ENCODE measurements at regions of chr16 and their contacts with region 1.

Region 1: DNA sequence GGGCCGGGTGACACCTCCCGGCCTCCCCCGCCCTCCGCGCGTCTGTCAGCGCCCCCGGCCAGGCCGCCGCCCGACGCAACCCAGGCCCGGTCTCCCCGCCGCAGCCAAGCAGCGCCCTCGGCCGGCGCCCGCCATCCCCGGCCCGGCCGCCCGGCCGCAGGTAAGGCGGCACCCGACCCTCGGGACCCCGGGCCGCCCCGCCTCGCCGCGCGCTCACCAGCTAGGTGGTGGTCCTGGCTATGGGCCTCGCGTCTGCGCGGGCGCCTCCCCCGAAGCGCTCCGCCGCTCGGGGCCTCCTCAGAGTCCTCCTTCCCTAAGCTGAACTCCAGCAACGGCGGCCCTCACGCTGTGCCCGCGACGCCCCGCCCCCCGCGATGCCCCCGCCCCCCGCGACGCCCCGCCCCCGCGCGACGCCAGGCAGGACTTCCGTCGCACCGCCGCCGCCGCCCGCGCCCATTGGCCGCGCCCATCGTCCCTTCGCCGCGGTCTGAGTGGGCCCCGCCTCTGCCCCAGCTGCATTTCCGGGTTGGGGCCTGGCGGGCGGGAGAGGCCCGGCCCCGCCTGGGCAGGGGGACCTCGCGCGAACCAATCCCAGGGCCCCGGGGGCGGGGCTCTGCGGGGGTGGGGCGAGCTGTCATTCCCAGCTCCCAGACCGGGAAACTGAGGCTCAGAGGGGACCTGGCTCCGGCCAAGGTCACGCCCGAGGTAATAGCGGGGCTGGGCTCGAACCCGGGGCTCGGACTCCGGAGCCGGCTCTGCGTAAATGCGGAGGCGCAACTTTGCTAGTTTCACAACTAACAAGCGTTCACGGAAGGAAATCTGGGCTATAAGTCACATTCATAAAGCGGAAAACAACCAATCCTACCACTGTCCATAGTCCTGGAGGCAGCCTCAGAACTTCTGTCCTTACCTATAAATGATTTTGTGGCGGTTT is 9.0 kb upstream of the KCTD5 start:
- DNase-seq: peak; percentile 89 to 97 (median 96)
- ATAC-seq: peak; percentile 97
- H3K4me3 ChIP-seq: peak overlapping the region; percentile 75
- H3K4me3 Mint-ChIP-seq: peak overlapping the region; percentile 68 to 90 (median 86)
- H3K27ac ChIP-seq: peak overlapping the region; percentile 75
- H3K27ac Mint-ChIP-seq: peak overlapping the region in 8 of 9 donors; percentile 68 to 89 (median 82)
- H3K4me1 ChIP-seq: peaks cover 8 to 9% of the 10 kb centered on the region in 2 donors
- H3K4me1 Mint-ChIP-seq: peaks cover 12 to 45% (median 34%) of the 10 kb centered on the region in 7 donors
- H3K27me3 ChIP-seq: no peaks in the 10 kb centered on the region
- H3K27me3 Mint-ChIP-seq: no peaks in the 10 kb centered on the region

Region 2: DNA sequence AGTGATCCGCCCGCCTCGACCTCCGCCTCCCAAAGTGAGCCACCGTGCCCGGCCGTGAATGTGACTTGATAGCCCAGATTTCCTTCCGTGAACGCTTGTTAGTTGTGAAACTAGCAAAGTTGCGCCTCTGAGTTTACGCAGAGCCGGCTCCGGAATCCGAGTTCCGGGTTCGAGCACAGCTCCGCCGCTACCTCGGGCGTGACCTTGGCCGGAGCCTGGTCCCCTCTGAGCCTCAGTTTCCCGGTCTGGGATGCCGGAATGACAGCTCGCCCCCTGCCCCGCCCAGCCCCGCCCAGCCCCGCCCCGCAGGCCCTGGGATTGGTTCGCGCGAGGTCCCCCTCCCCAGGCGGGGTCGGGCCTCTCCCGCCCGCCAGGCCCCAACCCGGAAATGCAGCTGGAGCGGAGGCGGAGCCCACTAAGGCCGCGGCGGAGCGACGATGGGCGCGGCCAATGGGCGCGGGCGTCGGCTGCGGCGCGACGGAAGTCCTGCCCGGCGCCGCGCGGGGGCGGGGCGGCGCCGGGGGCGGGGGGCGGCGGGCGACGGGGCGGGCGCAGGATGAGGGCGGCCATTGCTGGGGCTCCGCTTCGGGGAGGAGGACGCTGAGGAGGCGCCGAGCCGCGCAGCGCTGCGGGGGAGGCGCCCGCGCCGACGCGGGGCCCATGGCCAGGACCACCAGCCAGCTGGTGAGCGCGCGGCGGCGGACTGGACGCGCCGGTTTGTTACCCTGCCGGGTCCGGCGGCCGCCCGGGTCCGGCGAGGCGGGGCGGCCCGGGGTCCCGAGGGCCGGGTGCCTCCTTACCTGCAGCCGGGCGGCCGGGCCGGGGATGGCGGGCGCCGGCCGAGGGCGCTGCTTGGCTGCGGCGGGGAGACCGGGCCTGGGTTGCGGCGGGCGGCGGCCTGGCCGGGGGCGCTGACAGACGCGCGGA is 135.6 kb before region 1 on chr16 and contains the start of gene PDPK1:
- CTCF ChIA-PET with region 1: no interaction called
- POLR2A ChIA-PET with region 1: no interaction called
- intact Hi-C with region 1: loop called in 1 of 2 experiments (anchors 5 kb)
- DNase-seq: peak; percentile 87 to 97 (median 94)
- ATAC-seq: peak; percentile 92
- H3K4me3 ChIP-seq: peak within 1 kb of the TSS; percentile 57
- H3K4me3 Mint-ChIP-seq: peak within 1 kb of the TSS; percentile 84 to 94 (median 88)
- H3K27ac ChIP-seq: peak within 1 kb of the TSS; percentile 65
- H3K27ac Mint-ChIP-seq: peak within 1 kb of the TSS; percentile 62 to 95 (median 89)
- H3K4me1 ChIP-seq: peaks cover 0 to 14% of the 10 kb centered on the region in 2 donors
- H3K4me1 Mint-ChIP-seq: peaks cover 26 to 53% (median 43%) of the 10 kb centered on the region in 7 donors
- H3K27me3 ChIP-seq: no peaks in the 10 kb centered on the region
- H3K27me3 Mint-ChIP-seq: no peaks in the 10 kb centered on the region
- total RNA-seq, gene PDPK1: 52.2 to 71.5 (median 58.3) TPM

Region 3: GRCh38 chr16:2715519-2715918 is 42.2 kb after region 1 on chr16:
- CTCF ChIA-PET with region 1: no interaction called
- POLR2A ChIA-PET with region 1: no interaction called
- intact Hi-C with region 1: loop called in 1 of 2 experiments (anchors 1 kb)
- DNase-seq: peak; percentile 63 to 92 (median 79)
- ATAC-seq: peak; percentile 97
- H3K4me3 ChIP-seq: no peak overlapping the region
- H3K4me3 Mint-ChIP-seq: peak overlapping the region in 4 of 10 donors; percentile 9 to 55 (median 32)
- H3K27ac ChIP-seq: no peak overlapping the region
- H3K27ac Mint-ChIP-seq: no peak overlapping the region
- H3K4me1 ChIP-seq: peaks cover 0 to 3% of the 10 kb centered on the region in 2 donors
- H3K4me1 Mint-ChIP-seq: peaks cover 0 to 15% (median 5%) of the 10 kb centered on the region in 7 donors
- H3K27me3 ChIP-seq: no peaks in the 10 kb centered on the region
- H3K27me3 Mint-ChIP-seq: peaks cover 0 to 6% (median 0%) of the 10 kb centered on the region in 5 donors

Region 4: GRCh38 chr16:2752035-2752849 is 78.9 kb after region 1 on chr16 and contains the start of gene SRRM2:
- CTCF ChIA-PET with region 1: no interaction called
- POLR2A ChIA-PET with region 1: interaction called, 4 read pairs
- intact Hi-C with region 1: loop called (anchors 1 to 2 kb)
- DNase-seq: peak; percentile 92 to 98 (median 96)
- ATAC-seq: peak; percentile 92
- H3K4me3 ChIP-seq: peak within 1 kb of the TSS; percentile 68
- H3K4me3 Mint-ChIP-seq: peak within 1 kb of the TSS; percentile 89 to 98 (median 94)
- H3K27ac ChIP-seq: peak within 1 kb of the TSS; percentile 100
- H3K27ac Mint-ChIP-seq: peak within 1 kb of the TSS; percentile 96 to 100 (median 99)
- H3K4me1 ChIP-seq: peaks cover 35 to 40% of the 10 kb centered on the region in 2 donors
- H3K4me1 Mint-ChIP-seq: peaks cover 37 to 57% (median 50%) of the 10 kb centered on the region in 7 donors
- H3K27me3 ChIP-seq: no peaks in the 10 kb centered on the region
- H3K27me3 Mint-ChIP-seq: no peaks in the 10 kb centered on the region
- total RNA-seq, gene SRRM2: 590 to 1,259 (median 1,020) TPM

Region 5: GRCh38 chr16:2911580-2912329 is 238.4 kb after region 1 on chr16 and contains the start of gene FLYWCH1:
- CTCF ChIA-PET with region 1: no interaction called
- POLR2A ChIA-PET with region 1: no interaction called
- intact Hi-C with region 1: loop called in 1 of 2 experiments (anchors 5 kb)
- DNase-seq: peak; percentile 94 to 99 (median 97)
- ATAC-seq: peak; percentile 99
- H3K4me3 ChIP-seq: peak within 1 kb of the TSS; percentile 85
- H3K4me3 Mint-ChIP-seq: peak within 1 kb of the TSS; percentile 80 to 97 (median 92)
- H3K27ac ChIP-seq: peak within 1 kb of the TSS; percentile 78
- H3K27ac Mint-ChIP-seq: peak within 1 kb of the TSS; percentile 80 to 96 (median 87)
- H3K4me1 ChIP-seq: peaks cover 7 to 8% of the 10 kb centered on the region in 2 donors
- H3K4me1 Mint-ChIP-seq: peaks cover 11 to 39% (median 30%) of the 10 kb centered on the region in 7 donors
- H3K27me3 ChIP-seq: no peaks in the 10 kb centered on the region
- H3K27me3 Mint-ChIP-seq: peaks cover 0 to 10% (median 0%) of the 10 kb centered on the region in 5 donors
- total RNA-seq, gene FLYWCH1: 48.6 to 149 (median 87.0) TPM

Region 6: GRCh38 chr16:3058135-3058999 is 385.0 kb after region 1 on chr16:
- CTCF ChIA-PET with region 1: no interaction called
- POLR2A ChIA-PET with region 1: no interaction called
- intact Hi-C with region 1: no loop called
- DNase-seq: peak in 4 of 9 donors; percentile 42 to 61 (median 52)
- ATAC-seq: peak; percentile 65
- H3K4me3 ChIP-seq: peak overlapping the region; percentile 77
- H3K4me3 Mint-ChIP-seq: peak overlapping the region; percentile 79 to 95 (median 88)
- H3K27ac ChIP-seq: peak overlapping the region; percentile 89
- H3K27ac Mint-ChIP-seq: peak overlapping the region in 8 of 9 donors; percentile 38 to 93 (median 84)
- H3K4me1 ChIP-seq: peaks cover 25 to 46% of the 10 kb centered on the region in 2 donors
- H3K4me1 Mint-ChIP-seq: peaks cover 34 to 62% (median 48%) of the 10 kb centered on the region in 7 donors
- H3K27me3 ChIP-seq: no peaks in the 10 kb centered on the region
- H3K27me3 Mint-ChIP-seq: no peaks in the 10 kb centered on the region

Measured in naive thymus-derived CD4-positive, alpha-beta T cell (primary cell).